ENCODE measurements at regions of chr2 and their contacts with region 1.

Region 1: DNA sequence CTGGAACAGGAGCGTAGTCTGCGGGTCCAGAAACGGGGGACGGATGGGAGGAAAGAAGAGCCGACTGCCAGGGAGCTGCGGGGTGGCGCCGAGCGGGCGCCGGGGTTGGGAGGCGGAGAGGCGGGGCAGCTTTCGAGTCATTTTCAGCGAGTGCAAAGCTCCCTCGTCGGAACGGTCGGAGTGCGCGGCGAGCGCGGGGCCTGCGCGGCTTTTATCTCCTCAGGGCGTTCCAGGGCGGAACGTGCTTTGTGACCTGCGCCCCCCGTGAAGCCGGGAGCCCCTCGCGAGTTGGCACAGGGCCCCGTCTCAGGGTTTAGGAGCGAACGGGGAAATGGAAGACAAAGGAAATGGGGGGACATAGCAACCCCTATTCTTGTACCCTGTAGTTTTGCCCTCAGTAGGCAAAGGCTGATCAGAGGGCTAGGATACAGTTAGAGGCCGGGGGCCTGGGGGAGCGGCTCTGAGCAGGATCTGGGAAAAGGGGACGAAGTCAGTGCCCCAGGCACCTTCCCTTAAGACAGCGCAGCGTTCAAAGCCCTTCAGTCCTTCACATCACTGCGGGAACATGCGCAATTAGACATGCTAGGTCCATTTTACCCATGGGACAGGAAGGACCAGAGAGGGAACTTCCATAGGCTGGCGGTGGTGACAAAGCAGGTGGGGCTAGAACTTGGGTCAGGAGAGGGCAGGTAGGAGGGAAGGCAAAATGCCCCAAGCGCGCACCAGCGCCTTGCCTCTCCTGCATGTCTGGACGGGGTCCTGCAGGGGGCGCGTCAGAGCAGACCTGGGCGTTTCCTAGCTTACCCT is 60.1 kb upstream of the IL1RL1 start:
- DNase-seq: peak; percentile 30
- ATAC-seq: peak; percentile 64
- H3K4me3 Mint-ChIP-seq: peak overlapping the region; percentile 75
- H3K27ac Mint-ChIP-seq: no peak overlapping the region
- H3K4me1 Mint-ChIP-seq: peaks cover 12% of the 10 kb centered on the region
- H3K27me3 Mint-ChIP-seq: peaks cover 30% of the 10 kb centered on the region
- CTCF ChIP-seq: no peak

Region 2: GRCh38 chr2:100984892-100985379 is 1266.3 kb before region 1 on chr2:
- CTCF ChIA-PET with region 1: no interaction called
- POLR2A ChIA-PET with region 1: no interaction called
- intact Hi-C with region 1: no loop called
- DNase-seq: peak; percentile 61
- ATAC-seq: peak; percentile 88
- H3K4me3 Mint-ChIP-seq: no peak overlapping the region
- H3K27ac Mint-ChIP-seq: no peak overlapping the region
- H3K4me1 Mint-ChIP-seq: no peaks in the 10 kb centered on the region
- H3K27me3 Mint-ChIP-seq: peaks cover 8% of the 10 kb centered on the region
- CTCF ChIP-seq: peak; percentile 76

Region 3: DNA sequence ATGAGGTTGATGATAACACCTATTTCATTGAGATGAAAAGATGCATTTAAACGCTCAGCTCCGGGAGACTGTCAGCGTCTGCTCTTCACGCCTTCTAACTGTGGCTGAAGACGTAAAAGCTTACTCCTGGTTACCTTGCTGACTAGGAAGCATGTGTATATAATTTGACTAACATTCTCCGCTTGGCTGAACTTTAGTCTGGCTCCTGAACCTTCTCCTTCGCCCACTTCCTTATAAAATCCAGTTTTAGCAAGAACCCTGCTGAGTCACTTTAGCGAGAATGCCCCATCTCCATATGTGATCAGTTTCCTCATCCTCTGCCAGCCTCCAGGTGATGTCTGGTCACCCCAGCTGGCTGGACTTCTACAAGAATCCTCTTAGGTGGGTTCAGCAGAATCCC is 851.2 kb before region 1 on chr2:
- CTCF ChIA-PET with region 1: no interaction called
- POLR2A ChIA-PET with region 1: no interaction called
- intact Hi-C with region 1: loop called (anchors 5 kb)
- DNase-seq: no peak
- ATAC-seq: peak; percentile 30
- H3K4me3 Mint-ChIP-seq: peak overlapping the region; percentile 56
- H3K27ac Mint-ChIP-seq: peak overlapping the region; percentile 84
- H3K4me1 Mint-ChIP-seq: peaks cover 58% of the 10 kb centered on the region
- H3K27me3 Mint-ChIP-seq: peaks cover 5% of the 10 kb centered on the region
- CTCF ChIP-seq: no peak

Region 4: DNA sequence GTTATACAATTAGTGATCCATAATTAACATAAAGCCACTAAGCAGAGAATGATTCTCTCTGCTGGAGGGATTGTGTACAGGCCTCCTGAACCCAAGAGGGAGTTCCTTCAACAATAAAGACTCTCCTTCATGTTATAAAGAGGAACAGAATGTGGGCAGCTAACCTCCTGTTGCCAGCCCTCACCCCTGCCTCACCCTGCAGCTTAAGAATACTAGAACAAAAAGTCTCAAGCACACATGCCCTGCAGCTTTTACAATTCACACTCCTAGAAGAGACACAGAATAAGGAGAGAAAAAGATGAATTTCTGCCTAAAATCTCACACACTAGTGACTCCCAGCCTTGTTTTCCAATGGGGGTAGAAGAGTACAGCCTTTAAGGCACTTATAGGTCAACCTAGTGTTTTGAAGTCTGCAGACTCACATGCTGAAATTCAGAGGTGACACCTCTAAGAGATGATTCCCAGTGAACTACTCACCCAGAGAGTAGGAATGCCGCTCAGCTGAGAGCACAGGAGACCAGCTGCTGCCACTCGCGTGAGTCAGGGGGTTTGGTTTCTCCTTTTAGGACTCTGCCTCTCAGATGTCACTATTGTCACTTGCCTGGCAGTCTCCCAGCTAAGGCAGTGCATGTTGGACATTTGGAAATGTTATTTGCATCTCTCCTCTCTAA is 27.6 kb after region 1 on chr2:
- CTCF ChIA-PET with region 1: no interaction called
- POLR2A ChIA-PET with region 1: no interaction called
- intact Hi-C with region 1: no loop called
- DNase-seq: no peak
- ATAC-seq: no peak
- H3K4me3 Mint-ChIP-seq: no peak overlapping the region
- H3K27ac Mint-ChIP-seq: no peak overlapping the region
- H3K4me1 Mint-ChIP-seq: no peaks in the 10 kb centered on the region
- H3K27me3 Mint-ChIP-seq: peaks cover 28% of the 10 kb centered on the region
- CTCF ChIP-seq: no peak

Region 5: DNA sequence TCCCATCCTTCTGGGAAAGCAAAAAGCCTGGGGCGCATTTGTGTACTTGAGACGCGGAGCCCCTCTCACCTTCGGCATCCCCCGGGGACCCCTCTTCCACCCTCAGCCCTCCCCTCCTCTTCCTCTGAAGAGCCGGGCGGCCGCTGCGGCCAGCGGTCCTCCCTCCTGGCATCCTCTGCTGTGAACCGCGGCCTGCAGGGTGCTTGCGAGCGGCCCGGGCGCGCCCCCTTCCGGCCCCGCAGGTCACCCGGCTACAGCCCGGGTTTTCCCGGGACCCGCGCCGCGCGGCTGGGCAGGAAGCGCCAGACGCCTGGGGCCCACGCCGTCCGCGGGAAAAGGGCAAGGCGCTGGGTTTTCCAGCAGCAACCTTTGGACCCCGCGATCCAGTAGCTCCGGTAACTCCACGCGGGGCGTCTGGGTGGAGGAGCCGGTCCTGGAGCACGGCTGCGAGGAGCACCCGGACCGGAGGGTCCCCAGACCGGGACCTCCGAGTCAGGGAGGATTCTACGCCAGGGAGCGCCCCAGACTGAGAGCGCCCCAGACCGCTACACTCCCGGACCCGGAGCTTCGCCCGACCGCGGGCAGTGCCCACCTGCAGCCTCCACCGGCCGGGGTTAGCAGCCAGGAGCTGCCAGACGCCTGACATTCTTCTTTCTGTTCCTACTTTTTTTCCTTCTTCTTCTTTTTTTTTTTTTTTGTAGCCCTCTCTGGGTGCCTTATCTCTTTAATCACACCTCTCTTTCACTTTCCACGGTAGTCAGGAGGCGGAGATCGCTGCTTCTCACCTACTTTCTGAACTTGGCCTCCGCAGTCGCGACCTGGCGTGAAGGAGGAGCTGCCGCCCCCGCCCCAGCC is 104.5 kb after region 1 on chr2 and contains the start of gene IL18R1:
- CTCF ChIA-PET with region 1: no interaction called
- POLR2A ChIA-PET with region 1: no interaction called
- intact Hi-C with region 1: loop called (anchors 5 kb)
- DNase-seq: peak; percentile 67
- ATAC-seq: peak; percentile 91
- H3K4me3 Mint-ChIP-seq: peak within 1 kb of the TSS; percentile 90
- H3K27ac Mint-ChIP-seq: peak within 1 kb of the TSS; percentile 86
- H3K4me1 Mint-ChIP-seq: peaks cover 25% of the 10 kb centered on the region
- H3K27me3 Mint-ChIP-seq: no peaks in the 10 kb centered on the region
- CTCF ChIP-seq: no peak
- total RNA-seq, gene IL18R1: 1.7 and 2.2 TPM in 2 replicates

Region 6: DNA sequence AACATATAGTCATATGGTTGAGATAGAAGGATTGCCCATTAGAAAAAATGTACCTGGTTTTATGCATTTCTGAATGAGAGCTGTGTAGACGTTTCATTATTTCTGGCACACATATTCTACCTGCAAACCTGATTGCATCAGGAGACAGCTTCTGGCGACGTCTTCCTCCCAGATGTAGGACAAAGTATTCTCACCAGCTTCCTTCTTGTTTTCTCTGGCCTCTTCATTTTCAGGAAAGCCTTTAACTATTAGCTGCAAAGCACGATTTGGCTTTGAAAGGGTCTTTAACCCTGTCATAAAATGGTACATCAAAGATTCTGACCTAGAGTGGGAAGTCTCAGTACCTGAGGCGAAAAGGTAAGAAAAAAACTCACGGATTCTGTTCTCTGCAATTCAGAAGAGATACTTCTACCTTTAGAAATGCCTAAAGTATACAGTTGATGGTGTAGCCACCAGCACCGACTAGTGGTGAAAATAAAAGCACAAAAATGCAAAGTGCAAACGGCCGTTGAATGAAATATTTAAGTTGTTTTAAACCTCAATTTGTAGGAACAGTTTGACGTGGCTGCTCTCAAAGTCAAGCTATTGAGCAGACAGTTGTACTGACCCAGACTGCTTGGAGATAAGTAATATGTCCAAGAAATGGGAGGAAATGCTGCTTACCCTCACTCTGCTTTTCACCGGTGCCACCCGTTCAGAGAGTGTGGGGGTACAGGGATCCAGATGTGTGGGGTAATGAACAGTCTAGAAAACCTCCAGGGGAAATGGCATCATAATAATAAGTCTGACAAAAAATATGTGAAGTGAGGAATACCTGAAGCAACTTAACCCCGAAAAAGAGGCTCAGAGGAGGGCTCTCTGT is 192.0 kb after region 1 on chr2:
- CTCF ChIA-PET with region 1: interaction called, 4 read pairs
- POLR2A ChIA-PET with region 1: no interaction called
- intact Hi-C with region 1: loop called (anchors 1 kb)
- DNase-seq: no peak
- ATAC-seq: peak; percentile 49
- H3K4me3 Mint-ChIP-seq: no peak overlapping the region
- H3K27ac Mint-ChIP-seq: no peak overlapping the region
- H3K4me1 Mint-ChIP-seq: peaks cover 2% of the 10 kb centered on the region
- H3K27me3 Mint-ChIP-seq: no peaks in the 10 kb centered on the region
- CTCF ChIP-seq: no peak